ENCODE measurements at regions of chr17 and their contacts with region 1.

Region 1: GRCh38 chr17:47889734-47890529 is 6.1 kb upstream of the SP2 start:
- DNase-seq: peak; percentile 95
- H3K4me3 ChIP-seq: no peak overlapping the region
- H3K27ac ChIP-seq: no peak overlapping the region
- H3K4me1 ChIP-seq: peaks cover 8% of the 10 kb centered on the region
- H3K27me3 ChIP-seq: no peaks in the 10 kb centered on the region
- CTCF ChIP-seq: peak; percentile 95 to 99 (median 97)
- POLR2A ChIP-seq: no peak

Region 2: DNA sequence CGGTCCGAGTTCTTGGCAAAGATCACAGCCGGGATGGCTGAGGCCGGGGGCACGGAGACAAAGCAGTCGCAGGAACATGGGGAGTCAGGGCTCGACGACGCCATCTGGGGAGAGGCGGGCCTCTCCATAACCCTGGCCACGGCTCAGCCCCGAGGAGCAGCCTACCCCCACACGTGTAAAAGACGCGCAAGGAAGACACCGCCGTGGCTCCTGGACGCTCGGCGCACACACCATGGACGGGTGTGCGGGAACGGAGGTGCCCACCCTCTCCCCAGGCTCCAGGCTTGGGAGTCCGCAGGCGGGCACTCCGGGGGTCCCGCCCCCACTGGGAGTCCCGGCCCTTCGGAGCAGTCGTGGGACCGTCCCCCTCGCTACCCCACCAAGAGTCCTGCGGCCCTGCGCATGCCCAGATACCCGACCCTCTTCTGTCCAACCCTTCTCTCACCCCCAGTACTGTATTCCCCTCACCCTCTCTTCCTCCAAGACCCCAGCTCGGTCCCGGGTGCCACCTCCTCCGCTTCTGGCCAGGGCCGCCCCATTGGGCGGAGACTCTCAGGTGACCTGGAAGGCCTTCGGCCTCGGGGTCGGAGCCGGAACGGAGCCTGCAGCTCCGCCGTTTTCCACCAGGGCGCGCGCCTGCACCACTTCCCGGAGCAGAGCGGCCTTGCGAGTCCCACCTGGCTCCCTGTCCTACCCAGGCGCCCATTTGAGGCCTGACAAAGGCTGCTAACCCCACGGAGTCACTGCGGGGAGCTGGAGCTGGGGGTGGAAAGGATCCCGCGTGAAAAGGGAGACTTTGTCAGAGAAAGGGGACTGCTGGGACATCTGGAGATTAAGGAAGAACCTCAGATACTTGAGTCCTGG is 49.0 kb before region 1 on chr17 and contains the start of gene SCRN2:
- intact Hi-C with region 1: loop called (anchors 5 kb)
- DNase-seq: peak; percentile 92
- H3K4me3 ChIP-seq: peak within 1 kb of the TSS; percentile 73 to 76
- H3K27ac ChIP-seq: peak within 1 kb of the TSS; percentile 60 to 66
- H3K4me1 ChIP-seq: peaks cover 18% of the 10 kb centered on the region
- H3K27me3 ChIP-seq: no peaks in the 10 kb centered on the region
- CTCF ChIP-seq: peak; percentile 94 to 98 (median 95)
- POLR2A ChIP-seq: no peak
- total RNA-seq, gene SCRN2: 31.0 to 38.0 TPM

Region 3: DNA sequence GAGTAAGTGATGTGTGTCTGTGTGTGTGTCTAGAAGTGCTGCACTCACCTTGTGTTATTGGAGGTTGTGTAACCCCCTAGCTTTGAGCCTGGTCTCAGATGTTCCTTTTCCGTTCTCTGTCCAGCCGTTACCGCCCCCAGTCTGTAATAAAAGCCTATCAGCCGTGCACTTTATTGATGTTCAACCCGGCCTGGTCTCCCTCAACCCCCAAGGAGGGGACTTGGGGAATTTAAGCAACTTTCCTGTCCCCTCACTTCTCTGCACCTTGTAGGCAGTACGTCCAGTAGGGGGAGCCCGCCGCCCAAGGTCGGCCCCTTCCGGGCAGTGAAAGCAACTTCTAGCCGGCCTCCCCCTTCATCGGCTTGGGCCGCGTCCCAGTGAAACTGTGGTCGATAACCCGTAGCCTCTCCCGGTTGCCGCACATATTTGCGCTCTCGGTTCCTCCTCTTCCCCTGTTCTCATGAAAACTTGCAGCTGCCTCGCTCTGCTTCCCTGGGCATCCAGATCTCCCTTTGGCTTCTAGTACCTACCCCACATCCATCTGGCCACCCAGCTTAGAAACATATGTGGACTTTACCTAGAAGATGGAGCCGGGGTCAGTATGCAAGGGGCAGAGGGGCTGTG is 59.3 kb after region 1 on chr17:
- intact Hi-C with region 1: loop called (anchors 5 kb)
- DNase-seq: peak; percentile 94
- H3K4me3 ChIP-seq: no peak overlapping the region
- H3K27ac ChIP-seq: peak overlapping the region in 1 of 2 donors; percentile 58
- H3K4me1 ChIP-seq: peaks cover 39% of the 10 kb centered on the region
- H3K27me3 ChIP-seq: no peaks in the 10 kb centered on the region
- CTCF ChIP-seq: peak; percentile 76 to 92 (median 89)
- POLR2A ChIP-seq: no peak